HCT116 (cell line): ENCODE measurements at regions of chr3 and their contacts with region 1.

Region 1: DNA sequence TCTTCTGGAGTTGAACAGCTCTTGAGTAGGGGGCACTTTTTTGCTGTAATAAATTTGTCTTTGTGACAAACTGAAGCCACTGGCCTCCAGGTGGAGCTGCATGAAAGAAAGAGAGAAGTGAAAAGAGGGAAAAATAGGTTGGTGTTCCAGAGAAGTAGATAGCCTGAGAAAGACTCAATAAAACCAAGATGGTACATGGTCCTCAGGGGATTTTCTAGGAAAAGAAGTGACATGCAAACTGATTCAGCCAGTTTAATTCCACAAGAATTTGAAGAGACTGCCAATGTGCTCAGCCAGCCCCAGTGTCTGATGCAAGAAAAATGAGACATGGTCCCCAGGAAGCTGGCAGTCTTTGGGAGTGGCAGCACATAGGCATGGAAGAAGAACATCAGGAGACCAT is 152.7 kb downstream of the CD47 start:
- DNase-seq: peak; percentile 21
- ATAC-seq: 0 out of 2 replicates have a peak, but pooled peaks have one; percentile 46
- H3K4me3 ChIP-seq: no peak overlapping the region
- H3K27ac ChIP-seq: no peak overlapping the region
- H3K4me1 ChIP-seq: no peaks in the 10 kb centered on the region
- H3K27me3 ChIP-seq: no peaks in the 10 kb centered on the region
- CTCF ChIP-seq: peak; percentile 53 to 66 (median 56)
- POLR2A ChIP-seq: no peak
- RAD21 ChIP-seq: peak; percentile 79

Region 2: DNA sequence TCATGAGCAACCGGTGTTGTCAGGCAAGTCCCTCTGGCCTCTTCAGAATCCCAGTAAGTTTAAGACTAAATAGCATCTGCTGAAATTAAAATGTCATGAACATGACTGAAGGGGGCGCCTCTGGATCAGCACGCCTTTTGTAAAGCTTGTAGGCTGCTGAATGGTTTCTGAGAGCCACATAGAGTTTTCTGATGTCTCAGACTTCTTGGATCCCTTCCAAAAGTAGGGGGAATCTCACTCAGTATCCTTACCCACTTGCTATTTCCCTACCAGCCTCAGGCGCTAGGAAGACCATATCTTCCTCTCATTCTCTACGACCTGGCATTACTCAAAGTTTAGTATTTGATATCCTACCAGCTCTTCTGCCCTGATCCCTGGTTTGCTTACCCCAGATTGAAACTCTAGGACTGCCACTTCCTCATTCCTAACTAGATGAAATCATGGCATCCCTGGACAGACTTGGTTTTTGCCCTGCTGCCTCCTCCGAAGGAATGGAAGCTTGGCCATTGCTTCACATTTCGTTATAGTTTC is 215.4 kb after region 1 on chr3:
- CTCF ChIA-PET with region 1: no interaction called
- POLR2A ChIA-PET with region 1: no interaction called
- RAD21 ChIA-PET with region 1: no interaction called
- intact Hi-C with region 1: no loop called
- DNase-seq: peak; percentile 62
- ATAC-seq: peak; percentile 93
- H3K4me3 ChIP-seq: no peak overlapping the region
- H3K27ac ChIP-seq: no peak overlapping the region
- H3K4me1 ChIP-seq: peaks cover 3 to 11% of the 10 kb centered on the region in 2 experiments; a peak in 2 of 4 replicates
- H3K27me3 ChIP-seq: no peaks in the 10 kb centered on the region
- CTCF ChIP-seq: peak; percentile 59 to 68 (median 60); a peak in 5 of 6 replicates
- POLR2A ChIP-seq: no peak
- RAD21 ChIP-seq: peak; percentile 82

Region 3: DNA sequence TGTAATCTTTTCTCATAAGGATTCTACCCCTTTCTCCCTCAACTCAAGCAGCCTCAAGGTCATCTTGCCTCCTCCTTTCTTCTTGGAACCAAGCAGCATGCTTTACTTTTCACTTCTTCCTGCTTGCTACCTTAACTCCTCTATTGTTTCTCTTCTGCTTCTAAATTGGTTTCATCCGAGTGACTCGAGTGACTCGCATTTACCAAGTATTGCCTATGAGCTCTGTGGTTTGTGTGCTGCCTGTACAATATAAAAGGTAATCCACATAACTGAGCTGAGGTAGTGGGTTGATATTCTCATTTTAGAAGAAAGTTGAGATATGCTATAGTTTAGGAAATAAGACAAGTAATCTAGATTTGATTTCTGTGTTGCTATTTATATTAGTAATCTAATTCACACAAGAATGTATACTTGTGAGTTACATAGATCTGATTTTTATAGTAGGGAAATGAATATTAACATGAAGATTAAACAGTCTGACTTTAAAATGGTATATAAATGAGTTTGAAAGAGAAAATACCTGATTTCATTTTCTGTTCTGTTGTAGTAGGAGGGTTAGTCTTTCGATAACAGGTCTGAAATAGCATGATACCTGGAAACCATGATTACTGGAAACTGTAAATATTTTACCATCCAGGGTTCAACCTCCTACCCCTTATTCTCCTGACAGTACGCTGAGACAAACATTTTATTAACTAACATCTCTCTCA is 363.7 kb after region 1 on chr3:
- CTCF ChIA-PET with region 1: no interaction called
- POLR2A ChIA-PET with region 1: no interaction called
- RAD21 ChIA-PET with region 1: no interaction called
- intact Hi-C with region 1: loop called (anchors 10 kb)
- DNase-seq: no peak
- ATAC-seq: no peak
- H3K4me3 ChIP-seq: no peak overlapping the region
- H3K27ac ChIP-seq: no peak overlapping the region
- H3K4me1 ChIP-seq: peaks cover 0 to 16% of the 10 kb centered on the region in 2 experiments; a peak in 2 of 4 replicates
- H3K27me3 ChIP-seq: no peaks in the 10 kb centered on the region
- CTCF ChIP-seq: no peak
- POLR2A ChIP-seq: no peak
- RAD21 ChIP-seq: no peak

Region 4: DNA sequence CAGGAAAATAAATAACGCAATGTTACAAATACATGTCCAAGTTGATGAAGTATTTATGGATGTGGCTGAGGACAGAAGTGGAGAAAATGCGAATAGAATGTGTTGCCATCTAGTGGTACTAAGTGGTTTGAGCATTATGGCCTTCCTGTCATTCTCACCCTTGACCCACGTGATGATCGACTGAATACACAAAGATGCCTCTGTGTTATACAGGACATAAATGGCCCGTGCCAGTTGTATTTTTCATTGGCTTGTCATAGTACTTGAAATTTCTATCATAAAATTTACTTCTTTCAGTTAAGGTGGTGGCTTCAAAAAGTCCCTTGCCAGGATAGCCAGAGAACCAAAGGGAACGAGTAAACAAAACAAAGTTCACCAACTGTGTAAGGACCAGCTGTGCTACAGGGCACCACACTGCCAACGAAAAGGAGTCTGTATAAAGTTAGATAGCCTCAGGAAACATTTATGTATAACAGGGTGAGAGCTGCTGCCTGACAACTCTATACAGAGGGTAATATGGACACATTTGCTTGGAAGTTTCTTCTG is 468.6 kb after region 1 on chr3:
- CTCF ChIA-PET with region 1: interaction called, 7 read pairs
- POLR2A ChIA-PET with region 1: no interaction called
- RAD21 ChIA-PET with region 1: no interaction called
- intact Hi-C with region 1: loop called (anchors 1 kb)
- DNase-seq: peak; percentile 52
- ATAC-seq: peak; percentile 99
- H3K4me3 ChIP-seq: no peak overlapping the region
- H3K27ac ChIP-seq: no peak overlapping the region
- H3K4me1 ChIP-seq: no peaks in the 10 kb centered on the region
- H3K27me3 ChIP-seq: no peaks in the 10 kb centered on the region
- CTCF ChIP-seq: peak; percentile 50 to 79 (median 74); a peak in 5 of 6 replicates
- POLR2A ChIP-seq: no peak
- RAD21 ChIP-seq: peak; percentile 78

Region 5: DNA sequence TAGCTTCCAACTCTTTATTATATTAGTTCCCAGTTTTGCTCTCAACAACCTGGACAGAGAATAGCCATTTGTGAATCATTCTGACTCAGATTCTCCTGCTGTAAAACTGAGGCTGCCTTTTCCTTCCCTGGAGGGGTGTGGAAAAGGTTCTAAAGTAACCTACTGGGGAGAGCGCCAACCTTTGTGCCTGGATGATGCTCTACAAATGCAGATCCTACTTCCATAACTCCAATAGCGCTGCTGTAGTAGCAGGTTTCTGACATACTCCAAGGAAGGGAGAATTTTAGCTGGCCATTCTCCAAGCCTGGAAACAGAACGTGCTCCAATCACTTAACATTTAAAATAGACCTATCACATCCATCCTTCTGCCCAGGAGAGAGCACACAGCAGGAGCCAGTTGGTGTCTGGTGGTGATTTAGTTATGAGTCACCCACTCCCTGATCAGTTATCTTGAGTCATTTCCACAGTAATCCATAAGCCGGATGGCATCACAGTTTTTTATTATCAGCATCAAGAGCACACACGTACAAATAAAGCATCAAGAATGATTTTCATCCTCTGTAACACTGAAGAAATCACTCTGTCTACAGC is 534.0 kb after region 1 on chr3:
- CTCF ChIA-PET with region 1: interaction called, 10 read pairs
- POLR2A ChIA-PET with region 1: no interaction called
- RAD21 ChIA-PET with region 1: interaction called in 1 of 2 experiments, 5 read pairs
- intact Hi-C with region 1: loop called (anchors 2 kb)
- DNase-seq: peak; percentile 96
- ATAC-seq: peak; percentile 87
- H3K4me3 ChIP-seq: peak overlapping the region; percentile 12 to 38
- H3K27ac ChIP-seq: peak overlapping the region; percentile 85
- H3K4me1 ChIP-seq: peaks cover 37 to 71% of the 10 kb centered on the region in 2 experiments
- H3K27me3 ChIP-seq: no peaks in the 10 kb centered on the region
- CTCF ChIP-seq: no peak
- POLR2A ChIP-seq: no peak
- RAD21 ChIP-seq: peak; percentile 30; the same call in 1 of the 2 replicates

Region 6: GRCh38 chr3:108477511-108478147 is 539.5 kb after region 1 on chr3:
- CTCF ChIA-PET with region 1: interaction called, 10 read pairs
- POLR2A ChIA-PET with region 1: no interaction called
- RAD21 ChIA-PET with region 1: interaction called in 1 of 2 experiments, 5 read pairs
- intact Hi-C with region 1: loop called (anchors 2 kb)
- DNase-seq: peak; percentile 72
- ATAC-seq: peak; percentile 73
- H3K4me3 ChIP-seq: no peak overlapping the region
- H3K27ac ChIP-seq: no peak overlapping the region
- H3K4me1 ChIP-seq: peaks cover 15 to 36% of the 10 kb centered on the region in 2 experiments
- H3K27me3 ChIP-seq: no peaks in the 10 kb centered on the region
- CTCF ChIP-seq: peak; percentile 65 to 75 (median 71); a peak in 5 of 6 replicates
- POLR2A ChIP-seq: no peak
- RAD21 ChIP-seq: peak; percentile 80